Heart right ventricle (tissue), 16 donors: ENCODE measurements at regions of chr20 and their contacts with region 1.

Region 1: GRCh38 chr20:36411861-36412454 is 105.8 kb downstream of the DLGAP4 start:
- DNase-seq: no peak
- ATAC-seq: no peak
- H3K4me3 ChIP-seq: no peak overlapping the region
- H3K27ac ChIP-seq: no peak overlapping the region
- H3K4me1 ChIP-seq: no peaks in the 10 kb centered on the region
- H3K27me3 ChIP-seq: peaks cover 0 to 16% (median 6%) of the 10 kb centered on the region in 7 donors
- CTCF ChIP-seq: no peak

Region 2: GRCh38 chr20:36259177-36260061 is 152.5 kb before region 1 on chr20:
- intact Hi-C with region 1: loop called in 1 of 10 experiments (anchors 5 kb)
- DNase-seq: no peak
- ATAC-seq: no peak
- H3K4me3 ChIP-seq: no peak overlapping the region
- H3K27ac ChIP-seq: no peak overlapping the region
- H3K4me1 ChIP-seq: no peaks in the 10 kb centered on the region
- H3K27me3 ChIP-seq: peaks cover 0 to 5% (median 0%) of the 10 kb centered on the region in 7 donors
- CTCF ChIP-seq: no peak